Natural killer cell (primary cell): ENCODE measurements at regions of chr10 and their contacts with region 1.

Region 1: DNA sequence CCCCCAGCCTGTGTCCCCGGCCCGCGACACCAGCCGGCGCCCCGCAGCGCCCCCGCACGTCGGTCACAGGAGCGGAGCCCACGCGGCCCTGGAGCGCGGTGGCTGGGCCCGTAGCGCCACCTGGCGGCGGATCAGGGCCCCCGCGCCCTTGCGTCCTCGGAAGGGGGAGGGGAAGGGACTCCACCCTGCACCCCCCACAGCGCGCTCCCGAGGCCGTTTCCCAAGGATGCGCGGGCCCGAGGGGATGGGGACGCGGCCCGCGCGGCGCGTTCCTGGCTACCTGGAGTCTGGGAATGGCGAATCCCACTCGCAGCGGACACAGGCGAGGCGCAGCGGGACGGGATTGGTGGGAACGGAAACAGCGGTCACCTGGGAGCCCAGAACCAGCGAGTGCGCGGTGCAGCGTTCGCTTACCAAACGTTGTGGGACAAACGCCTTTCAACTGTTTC is 23.8 kb upstream of the MKI67 start:
- DNase-seq: peak; percentile 81 to 93
- ATAC-seq: peak; percentile 99
- H3K4me3 ChIP-seq: peak overlapping the region; percentile 57
- H3K4me3 Mint-ChIP-seq: peak overlapping the region; percentile 74
- H3K27ac ChIP-seq: no peak overlapping the region
- H3K27ac Mint-ChIP-seq: no peak overlapping the region
- H3K4me1 ChIP-seq: peaks cover 17% of the 10 kb centered on the region
- H3K4me1 Mint-ChIP-seq: peaks cover 12 to 14% of the 10 kb centered on the region in 2 donors
- H3K27me3 ChIP-seq: peaks cover 2% of the 10 kb centered on the region
- H3K27me3 Mint-ChIP-seq: peaks cover 0 to 16% of the 10 kb centered on the region in 2 donors
- CTCF ChIP-seq: peak; percentile 82

Region 2: DNA sequence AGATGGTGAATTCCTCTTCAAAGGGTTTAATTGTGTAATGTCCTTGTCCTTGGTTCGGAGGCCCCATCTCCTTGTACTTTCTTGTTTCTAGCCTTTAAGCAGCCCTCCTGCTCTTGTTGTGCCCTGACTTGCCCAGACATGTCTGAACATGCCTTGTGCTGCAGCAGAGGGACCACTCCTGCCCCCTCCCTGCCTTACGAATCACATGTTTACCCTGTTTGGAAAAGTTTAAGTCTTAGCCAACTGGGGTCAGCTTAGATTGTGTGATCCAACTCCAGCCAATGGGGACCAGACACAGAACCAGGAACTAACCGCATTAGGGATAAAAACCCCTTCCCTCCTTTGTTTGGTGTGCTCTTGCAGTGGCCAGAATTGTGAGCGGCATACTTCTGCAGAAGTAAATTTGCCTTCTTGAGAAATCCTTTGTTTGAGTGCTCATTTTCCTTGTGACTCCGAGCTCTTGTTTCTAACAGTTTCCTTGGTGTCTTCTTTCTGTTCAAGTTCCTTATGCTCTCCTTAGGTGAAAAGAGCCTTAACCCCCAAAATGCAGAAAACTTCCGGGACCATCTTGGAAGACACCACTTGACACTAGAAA is 286.7 kb before region 1 on chr10:
- intact Hi-C with region 1: no loop called
- DNase-seq: no peak
- ATAC-seq: no peak
- H3K4me3 ChIP-seq: no peak overlapping the region
- H3K4me3 Mint-ChIP-seq: no peak overlapping the region
- H3K27ac ChIP-seq: no peak overlapping the region
- H3K27ac Mint-ChIP-seq: no peak overlapping the region
- H3K4me1 ChIP-seq: no peaks in the 10 kb centered on the region
- H3K4me1 Mint-ChIP-seq: no peaks in the 10 kb centered on the region
- H3K27me3 ChIP-seq: no peaks in the 10 kb centered on the region
- H3K27me3 Mint-ChIP-seq: peaks cover 4 to 40% of the 10 kb centered on the region in 2 donors
- CTCF ChIP-seq: no peak

Region 3: GRCh38 chr10:127906548-127907377 is 243.3 kb before region 1 on chr10 and contains the start of gene PTPRE:
- intact Hi-C with region 1: loop called (anchors 5 kb)
- DNase-seq: peak; percentile 74 to 75
- ATAC-seq: peak; percentile 91 to 99 (median 98)
- H3K4me3 ChIP-seq: no peak within 1 kb of the TSS
- H3K4me3 Mint-ChIP-seq: peak within 1 kb of the TSS; percentile 49
- H3K27ac ChIP-seq: no peak within 1 kb of the TSS
- H3K27ac Mint-ChIP-seq: no peak within 1 kb of the TSS
- H3K4me1 ChIP-seq: peaks cover 10% of the 10 kb centered on the region
- H3K4me1 Mint-ChIP-seq: no peaks in the 10 kb centered on the region
- H3K27me3 ChIP-seq: peaks cover 11% of the 10 kb centered on the region
- H3K27me3 Mint-ChIP-seq: peaks cover 39 to 65% of the 10 kb centered on the region in 2 donors
- CTCF ChIP-seq: peak; percentile 73
- total RNA-seq, gene PTPRE: 274 to 280 (median 275) TPM

Region 4: DNA sequence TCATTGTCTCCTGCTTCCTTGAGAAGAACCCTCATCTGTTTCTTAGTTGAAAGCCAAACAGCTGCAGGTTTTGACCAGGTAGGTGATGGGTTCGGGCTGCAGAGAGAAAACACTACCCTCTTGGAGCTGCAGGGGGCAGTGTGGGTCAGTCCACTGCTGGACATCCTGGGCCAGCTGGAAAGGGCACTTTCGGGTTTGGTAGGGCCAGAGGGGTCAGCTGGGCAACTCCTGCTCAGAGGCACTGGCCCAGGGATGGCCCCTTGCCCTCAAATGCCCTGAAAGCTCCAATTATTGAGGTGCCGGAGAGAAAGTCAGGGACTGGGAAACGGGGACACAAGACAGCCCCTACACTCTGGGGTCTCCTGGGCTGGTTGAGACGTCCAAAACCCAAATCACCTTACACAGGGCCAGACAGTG is 114.5 kb before region 1 on chr10:
- intact Hi-C with region 1: loop called (anchors 1 kb)
- DNase-seq: peak; percentile 72 to 80
- ATAC-seq: peak; percentile 88 to 97 (median 97)
- H3K4me3 ChIP-seq: no peak overlapping the region
- H3K4me3 Mint-ChIP-seq: no peak overlapping the region
- H3K27ac ChIP-seq: no peak overlapping the region
- H3K27ac Mint-ChIP-seq: peak overlapping the region in 1 of 2 donors; percentile 53
- H3K4me1 ChIP-seq: peaks cover 6% of the 10 kb centered on the region
- H3K4me1 Mint-ChIP-seq: peaks cover 0 to 14% of the 10 kb centered on the region in 2 donors
- H3K27me3 ChIP-seq: no peaks in the 10 kb centered on the region
- H3K27me3 Mint-ChIP-seq: no peaks in the 10 kb centered on the region
- CTCF ChIP-seq: peak; percentile 92

Region 5: DNA sequence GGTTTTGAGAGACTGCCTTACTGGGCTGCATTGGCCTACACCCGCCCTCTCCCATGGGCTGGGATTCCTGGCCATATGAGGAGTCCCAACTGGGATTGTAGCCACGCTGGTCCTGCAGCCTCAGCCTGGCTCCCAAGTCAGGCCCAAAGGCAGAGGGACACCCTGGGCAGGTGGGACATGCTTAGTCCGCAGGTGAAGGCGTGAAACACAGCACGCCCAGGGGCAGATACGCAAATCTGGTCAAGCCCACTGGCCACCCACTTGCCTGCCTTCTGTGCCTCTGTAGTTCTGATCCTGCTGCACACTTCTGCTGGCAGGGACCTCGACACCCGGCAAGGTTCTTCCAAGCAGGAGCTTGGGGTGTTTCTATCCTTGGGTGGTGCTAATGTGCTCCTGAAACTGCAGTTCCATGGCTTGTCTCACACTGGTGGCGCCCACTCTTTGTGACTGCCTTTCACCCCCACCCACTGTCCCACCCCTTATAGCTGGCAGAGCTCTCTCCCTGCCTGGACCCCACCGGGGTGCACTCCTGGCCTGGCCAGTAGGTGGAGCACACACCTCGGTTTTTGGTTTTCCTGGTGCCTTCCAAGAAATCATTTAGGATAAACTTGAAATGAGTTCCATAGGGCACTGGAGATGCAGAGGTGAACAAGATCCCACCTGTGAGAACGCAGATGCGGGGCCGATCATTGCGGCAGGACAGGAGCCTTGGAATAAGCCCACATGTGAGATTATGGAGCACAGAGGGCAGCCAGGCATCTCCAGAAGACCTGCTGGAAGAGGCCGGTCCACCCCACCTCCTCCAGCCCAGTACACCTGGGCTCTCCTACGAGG is 71.7 kb before region 1 on chr10:
- intact Hi-C with region 1: loop called (anchors 1 kb)
- DNase-seq: peak in 1 of 2 donors; percentile 63
- ATAC-seq: peak; percentile 54 to 71 (median 68)
- H3K4me3 ChIP-seq: no peak overlapping the region
- H3K4me3 Mint-ChIP-seq: no peak overlapping the region
- H3K27ac ChIP-seq: no peak overlapping the region
- H3K27ac Mint-ChIP-seq: no peak overlapping the region
- H3K4me1 ChIP-seq: peaks cover 1% of the 10 kb centered on the region
- H3K4me1 Mint-ChIP-seq: peaks cover 32 to 33% of the 10 kb centered on the region in 2 donors
- H3K27me3 ChIP-seq: no peaks in the 10 kb centered on the region
- H3K27me3 Mint-ChIP-seq: no peaks in the 10 kb centered on the region
- CTCF ChIP-seq: peak; percentile 71

Region 6: DNA sequence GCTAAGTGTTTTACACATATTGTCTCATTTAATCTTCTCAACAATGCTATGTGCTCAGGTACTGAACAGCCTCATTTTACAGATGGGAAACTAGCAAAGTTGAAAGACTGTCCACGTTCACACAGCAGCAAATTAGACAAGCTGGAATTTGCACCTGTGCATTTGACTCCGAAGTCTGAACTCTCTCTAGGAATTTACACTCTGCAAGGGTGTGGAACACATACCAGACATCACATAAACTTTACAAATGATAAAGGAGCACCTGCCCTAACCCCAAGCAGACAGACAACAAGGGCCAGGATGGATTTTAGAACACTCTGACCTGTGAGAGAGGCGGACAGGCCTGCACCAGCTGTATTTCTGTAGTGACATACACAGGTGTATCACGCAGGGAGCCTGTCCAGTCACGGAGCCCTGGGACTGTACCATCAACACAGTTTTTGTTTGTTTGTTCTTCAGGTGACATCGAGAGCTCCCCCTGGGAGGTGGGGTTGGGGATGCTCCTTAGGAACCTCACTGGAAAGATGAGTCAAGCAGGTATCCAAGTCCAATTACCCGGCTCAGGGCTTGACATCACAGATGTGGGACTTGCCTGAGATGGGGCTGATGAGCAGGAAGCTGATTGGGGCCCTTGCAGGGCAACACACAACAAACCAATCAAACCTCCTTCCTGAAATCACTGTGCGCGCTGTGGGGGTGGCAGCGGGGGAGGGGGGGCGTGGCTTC is 54.9 kb before region 1 on chr10:
- intact Hi-C with region 1: loop called (anchors 5 kb)
- DNase-seq: peak; percentile 42 to 64
- ATAC-seq: peak; percentile 95 to 96 (median 95)
- H3K4me3 ChIP-seq: no peak overlapping the region
- H3K4me3 Mint-ChIP-seq: peak overlapping the region; percentile 87
- H3K27ac ChIP-seq: peak overlapping the region; percentile 65
- H3K27ac Mint-ChIP-seq: peak overlapping the region; percentile 85 to 90
- H3K4me1 ChIP-seq: peaks cover 39% of the 10 kb centered on the region
- H3K4me1 Mint-ChIP-seq: peaks cover 41 to 47% of the 10 kb centered on the region in 2 donors
- H3K27me3 ChIP-seq: no peaks in the 10 kb centered on the region
- H3K27me3 Mint-ChIP-seq: no peaks in the 10 kb centered on the region
- CTCF ChIP-seq: no peak